Activated CD4-positive, alpha-beta T cell treated with anti-CD3 and anti-CD28 coated beads for 36 hours (primary cell): ENCODE measurements at regions of chr14 and their contacts with region 1.

Region 1: DNA sequence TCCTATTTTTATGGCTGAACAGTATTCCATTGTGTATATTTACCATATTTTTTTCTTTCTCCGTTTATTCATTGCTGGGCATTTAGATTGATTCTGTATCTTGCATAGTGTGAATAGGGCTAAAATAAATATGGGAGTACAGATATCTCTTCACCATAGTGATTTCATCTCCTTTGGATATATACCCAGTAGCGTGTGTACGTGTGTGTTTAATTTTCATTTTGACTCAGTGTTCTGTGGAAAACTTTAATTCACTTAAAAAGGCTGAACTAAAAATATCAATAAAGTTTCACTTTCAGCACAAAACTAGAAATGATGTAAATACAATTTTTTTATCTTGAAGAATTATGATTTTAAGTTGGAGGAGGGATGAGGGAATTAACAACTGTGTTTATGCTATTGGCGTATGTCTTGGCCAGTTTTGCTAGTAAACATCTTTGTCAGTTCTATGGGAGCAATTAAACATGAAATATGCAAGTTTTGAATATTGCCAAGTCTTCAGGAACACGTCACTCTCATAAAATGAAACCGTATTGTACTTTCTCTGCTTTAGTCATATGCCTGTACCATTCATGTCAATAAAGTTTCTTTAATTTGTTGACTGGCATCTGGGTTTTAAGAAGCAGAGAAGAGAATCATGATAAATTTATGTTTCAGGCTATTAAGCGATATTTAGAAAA is 99.8 kb downstream of the PTGER2 start:
- DNase-seq: no peak
- ATAC-seq: peak; percentile 93
- H3K4me3 Mint-ChIP-seq: peak overlapping the region; percentile 47
- H3K27ac Mint-ChIP-seq: peak overlapping the region; percentile 92
- H3K4me1 Mint-ChIP-seq: peaks cover 32% of the 10 kb centered on the region
- H3K27me3 Mint-ChIP-seq: peaks cover 3% of the 10 kb centered on the region

Region 2: GRCh38 chr14:51979088-51979709 is 434.7 kb before region 1 on chr14:
- CTCF ChIA-PET with region 1: no interaction called
- POLR2A ChIA-PET with region 1: no interaction called
- intact Hi-C with region 1: no loop called
- DNase-seq: peak; percentile 90
- ATAC-seq: peak; percentile 67
- H3K4me3 Mint-ChIP-seq: no peak overlapping the region
- H3K27ac Mint-ChIP-seq: no peak overlapping the region
- H3K4me1 Mint-ChIP-seq: peaks cover 9% of the 10 kb centered on the region
- H3K27me3 Mint-ChIP-seq: peaks cover 1% of the 10 kb centered on the region

Region 3: DNA sequence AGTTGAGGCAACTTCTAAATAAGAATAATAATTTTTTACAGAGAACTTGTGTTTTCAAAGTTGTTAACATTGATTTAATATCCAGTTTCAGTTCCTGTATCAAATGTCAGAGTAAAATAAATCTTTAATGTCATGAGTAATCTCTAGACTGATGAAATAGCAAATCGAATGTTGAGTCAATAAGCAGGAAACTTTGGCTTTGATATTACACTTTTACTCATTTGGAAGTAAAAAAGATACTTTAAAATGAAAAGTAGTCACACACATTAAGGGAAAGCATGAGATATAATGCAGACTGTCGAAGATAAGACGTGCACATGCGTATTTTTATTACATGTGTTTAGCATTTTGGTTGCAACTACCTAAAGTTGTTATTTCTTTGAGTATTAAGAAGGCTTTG is 224.5 kb before region 1 on chr14:
- CTCF ChIA-PET with region 1: no interaction called
- POLR2A ChIA-PET with region 1: no interaction called
- intact Hi-C with region 1: loop called in 1 of 2 experiments (anchors 5 kb)
- DNase-seq: no peak
- ATAC-seq: peak; percentile 71
- H3K4me3 Mint-ChIP-seq: no peak overlapping the region
- H3K27ac Mint-ChIP-seq: no peak overlapping the region
- H3K4me1 Mint-ChIP-seq: peaks cover 19% of the 10 kb centered on the region
- H3K27me3 Mint-ChIP-seq: peaks cover 3% of the 10 kb centered on the region

Region 4: DNA sequence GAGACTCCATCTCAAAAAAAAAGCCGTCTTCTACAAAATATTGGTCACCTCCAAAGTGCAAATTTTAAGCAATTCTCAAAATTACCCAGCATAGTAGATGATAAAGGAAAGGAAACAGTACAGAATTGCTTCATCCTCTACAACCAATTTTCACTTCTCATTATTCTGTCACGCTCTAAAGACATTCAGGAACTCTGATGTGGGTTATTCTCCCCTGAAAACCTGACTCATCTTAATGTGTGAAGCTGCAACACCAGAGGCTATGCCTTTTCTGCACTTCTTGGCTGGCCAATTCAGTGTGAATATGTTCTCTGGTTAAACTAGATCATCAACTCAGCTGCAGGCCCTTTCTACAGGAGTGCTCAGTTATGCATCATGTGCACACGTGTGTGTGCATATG is 88.7 kb before region 1 on chr14:
- CTCF ChIA-PET with region 1: interaction called, 3 read pairs
- POLR2A ChIA-PET with region 1: interaction called, 3 read pairs
- intact Hi-C with region 1: loop called in 1 of 2 experiments (anchors 1 kb)
- DNase-seq: peak; percentile 45
- ATAC-seq: peak; percentile 87
- H3K4me3 Mint-ChIP-seq: no peak overlapping the region
- H3K27ac Mint-ChIP-seq: no peak overlapping the region
- H3K4me1 Mint-ChIP-seq: peaks cover 43% of the 10 kb centered on the region
- H3K27me3 Mint-ChIP-seq: peaks cover 8% of the 10 kb centered on the region

Region 5: GRCh38 chr14:52351233-52352060 is 62.4 kb before region 1 on chr14:
- CTCF ChIA-PET with region 1: interaction called, 5 read pairs
- POLR2A ChIA-PET with region 1: no interaction called
- intact Hi-C with region 1: loop called in 1 of 2 experiments (anchors 1 kb)
- DNase-seq: no peak
- ATAC-seq: peak; percentile 55
- H3K4me3 Mint-ChIP-seq: peak overlapping the region; percentile 13
- H3K27ac Mint-ChIP-seq: peak overlapping the region; percentile 68
- H3K4me1 Mint-ChIP-seq: peaks cover 52% of the 10 kb centered on the region
- H3K27me3 Mint-ChIP-seq: peaks cover 5% of the 10 kb centered on the region

Region 6: DNA sequence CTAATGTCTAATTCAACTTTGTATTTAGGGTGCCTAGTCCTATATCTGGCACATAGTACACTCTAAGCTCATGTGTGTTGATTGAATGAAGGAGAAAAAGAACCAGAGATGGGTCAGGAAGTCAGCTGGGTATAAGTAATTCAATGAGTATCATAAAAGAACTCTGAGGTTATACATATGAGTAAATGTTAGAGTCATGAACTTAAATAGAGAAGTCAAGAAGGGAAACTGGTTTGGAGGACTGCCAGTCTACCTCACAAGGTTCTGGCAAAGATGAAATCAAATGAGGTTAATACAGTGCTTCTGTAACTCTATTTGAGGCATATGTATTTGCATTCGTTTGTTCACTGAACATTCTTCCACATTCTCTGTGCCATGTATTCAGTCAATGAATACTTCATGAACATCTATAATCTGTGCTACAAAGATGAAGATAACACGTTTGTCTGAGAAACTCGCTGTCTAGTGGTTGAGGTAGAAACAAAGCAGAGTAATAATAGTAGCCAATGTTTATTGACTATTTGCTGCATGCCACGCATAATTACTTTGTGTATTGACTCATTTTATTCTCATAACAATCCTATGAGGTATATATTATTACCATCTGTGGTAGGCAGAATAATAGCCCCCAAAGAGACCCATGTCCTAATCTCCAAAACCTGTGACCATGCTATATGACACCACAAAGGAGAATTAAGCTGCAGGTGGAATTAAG is 10.9 kb before region 1 on chr14:
- CTCF ChIA-PET with region 1: interaction called, 12 read pairs
- POLR2A ChIA-PET with region 1: interaction called, 5 read pairs
- intact Hi-C with region 1: loop called (anchors 1 kb)
- DNase-seq: peak; percentile 64
- ATAC-seq: peak; percentile 94
- H3K4me3 Mint-ChIP-seq: no peak overlapping the region
- H3K27ac Mint-ChIP-seq: peak overlapping the region; percentile 3
- H3K4me1 Mint-ChIP-seq: peaks cover 47% of the 10 kb centered on the region
- H3K27me3 Mint-ChIP-seq: peaks cover 22% of the 10 kb centered on the region

Region 7: GRCh38 chr14:52455291-52456088 is 41.6 kb after region 1 on chr14:
- CTCF ChIA-PET with region 1: no interaction called
- POLR2A ChIA-PET with region 1: no interaction called
- intact Hi-C with region 1: loop called in 1 of 2 experiments (anchors 5 kb)
- DNase-seq: no peak
- ATAC-seq: peak; percentile 57
- H3K4me3 Mint-ChIP-seq: no peak overlapping the region
- H3K27ac Mint-ChIP-seq: no peak overlapping the region
- H3K4me1 Mint-ChIP-seq: peaks cover 8% of the 10 kb centered on the region
- H3K27me3 Mint-ChIP-seq: no peaks in the 10 kb centered on the region

Region 8: DNA sequence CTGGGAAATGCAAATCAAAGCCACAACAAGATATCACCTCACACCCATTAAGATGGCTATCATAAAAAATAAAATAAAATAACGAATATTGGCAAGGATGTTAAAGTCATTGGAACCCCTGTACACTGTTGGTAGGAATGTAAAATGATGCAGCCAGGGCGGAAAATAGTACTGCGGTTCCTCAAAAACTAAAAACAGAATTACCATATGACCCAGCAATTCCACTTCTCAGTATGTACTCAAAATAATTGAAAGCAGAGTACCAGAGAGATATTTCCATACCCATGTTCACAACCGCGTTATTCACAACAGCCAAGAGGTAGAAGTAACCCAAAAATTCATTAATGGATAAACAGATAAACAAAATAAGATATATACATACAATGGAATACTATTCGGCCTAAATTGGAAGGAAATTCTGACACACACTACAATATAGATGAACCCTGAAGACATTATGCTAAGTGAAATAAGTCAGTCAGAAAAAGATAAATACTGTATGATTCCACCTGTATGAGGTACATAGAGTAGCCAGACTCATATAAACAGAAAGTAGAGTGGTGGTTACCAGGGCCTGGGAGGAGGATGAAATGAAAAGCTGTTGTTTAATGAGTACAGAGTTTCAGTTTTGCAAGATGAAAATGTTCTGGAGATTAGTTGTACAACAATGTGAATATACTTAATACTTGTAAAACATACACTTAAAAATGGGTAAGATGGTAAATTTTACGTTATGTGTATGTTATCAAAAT is 53.8 kb after region 1 on chr14:
- CTCF ChIA-PET with region 1: no interaction called
- POLR2A ChIA-PET with region 1: no interaction called
- intact Hi-C with region 1: loop called in 1 of 2 experiments (anchors 2 kb)
- DNase-seq: peak; percentile 13
- ATAC-seq: peak; percentile 97
- H3K4me3 Mint-ChIP-seq: no peak overlapping the region
- H3K27ac Mint-ChIP-seq: no peak overlapping the region
- H3K4me1 Mint-ChIP-seq: peaks cover 7% of the 10 kb centered on the region
- H3K27me3 Mint-ChIP-seq: no peaks in the 10 kb centered on the region